A549 (cell line): ENCODE measurements at regions of chr9 and their contacts with region 1.

Region 1: GRCh38 chr9:36873247-36873875 is 160.7 kb downstream of the PAX5 start:
- DNase-seq: peak; percentile 73 to 83
- ATAC-seq: peak; percentile 81 to 97
- H3K4me3 ChIP-seq: no peak overlapping the region
- H3K27ac ChIP-seq: no peak overlapping the region
- H3K4me1 ChIP-seq: no peaks in the 10 kb centered on the region
- CTCF ChIP-seq: peak; percentile 90
- EP300 ChIP-seq: no peak
- POLR2A ChIP-seq: no peak
- RAD21 ChIP-seq: peak; percentile 97 to 98

Region 2: GRCh38 chr9:36748322-36748899 is 125.0 kb before region 1 on chr9:
- CTCF ChIA-PET with region 1: no interaction called
- POLR2A ChIA-PET with region 1: no interaction called
- DNase-seq: peak; percentile 35 to 41
- ATAC-seq: peak; percentile 68 to 83
- H3K4me3 ChIP-seq: no peak overlapping the region
- H3K27ac ChIP-seq: no peak overlapping the region
- H3K4me1 ChIP-seq: no peaks in the 10 kb centered on the region
- CTCF ChIP-seq: no peak
- EP300 ChIP-seq: no peak
- POLR2A ChIP-seq: no peak
- RAD21 ChIP-seq: no peak

Region 3: GRCh38 chr9:36862206-36863145 is 10.9 kb before region 1 on chr9:
- CTCF ChIA-PET with region 1: interaction called, 80 read pairs
- POLR2A ChIA-PET with region 1: no interaction called
- DNase-seq: peak; percentile 55 to 60
- ATAC-seq: peak; percentile 85 to 88
- H3K4me3 ChIP-seq: no peak overlapping the region
- H3K27ac ChIP-seq: no peak overlapping the region
- H3K4me1 ChIP-seq: no peaks in the 10 kb centered on the region; the same call in 2 of the 3 replicates
- CTCF ChIP-seq: peak; percentile 66
- EP300 ChIP-seq: no peak
- POLR2A ChIP-seq: no peak
- RAD21 ChIP-seq: peak; percentile 56 to 57

Region 4: GRCh38 chr9:36924071-36924470 is 50.7 kb after region 1 on chr9:
- CTCF ChIA-PET with region 1: interaction called, 12 read pairs
- POLR2A ChIA-PET with region 1: no interaction called
- DNase-seq: peak; percentile 90 to 98
- ATAC-seq: peak; percentile 90 to 92
- H3K4me3 ChIP-seq: no peak overlapping the region
- H3K27ac ChIP-seq: peak overlapping the region; percentile 39 to 75; a peak in 5 of 6 replicates
- H3K4me1 ChIP-seq: peaks cover 53% of the 10 kb centered on the region
- CTCF ChIP-seq: no peak
- EP300 ChIP-seq: peak in 1 of 2 experiments; percentile 54; a peak in 1 of 5 replicates
- POLR2A ChIP-seq: no peak
- RAD21 ChIP-seq: no peak

Region 5: GRCh38 chr9:36969216-36969771 is 95.9 kb after region 1 on chr9:
- CTCF ChIA-PET with region 1: interaction called, 166 read pairs
- POLR2A ChIA-PET with region 1: no interaction called
- DNase-seq: no peak
- ATAC-seq: peak in 1 of 2 experiments; percentile 27; a peak in 2 of 6 replicates
- H3K4me3 ChIP-seq: no peak overlapping the region
- H3K27ac ChIP-seq: no peak overlapping the region
- H3K4me1 ChIP-seq: peaks cover 8% of the 10 kb centered on the region; the same call in 2 of the 3 replicates
- CTCF ChIP-seq: no peak
- EP300 ChIP-seq: no peak
- POLR2A ChIP-seq: no peak
- RAD21 ChIP-seq: no peak

Region 6: DNA sequence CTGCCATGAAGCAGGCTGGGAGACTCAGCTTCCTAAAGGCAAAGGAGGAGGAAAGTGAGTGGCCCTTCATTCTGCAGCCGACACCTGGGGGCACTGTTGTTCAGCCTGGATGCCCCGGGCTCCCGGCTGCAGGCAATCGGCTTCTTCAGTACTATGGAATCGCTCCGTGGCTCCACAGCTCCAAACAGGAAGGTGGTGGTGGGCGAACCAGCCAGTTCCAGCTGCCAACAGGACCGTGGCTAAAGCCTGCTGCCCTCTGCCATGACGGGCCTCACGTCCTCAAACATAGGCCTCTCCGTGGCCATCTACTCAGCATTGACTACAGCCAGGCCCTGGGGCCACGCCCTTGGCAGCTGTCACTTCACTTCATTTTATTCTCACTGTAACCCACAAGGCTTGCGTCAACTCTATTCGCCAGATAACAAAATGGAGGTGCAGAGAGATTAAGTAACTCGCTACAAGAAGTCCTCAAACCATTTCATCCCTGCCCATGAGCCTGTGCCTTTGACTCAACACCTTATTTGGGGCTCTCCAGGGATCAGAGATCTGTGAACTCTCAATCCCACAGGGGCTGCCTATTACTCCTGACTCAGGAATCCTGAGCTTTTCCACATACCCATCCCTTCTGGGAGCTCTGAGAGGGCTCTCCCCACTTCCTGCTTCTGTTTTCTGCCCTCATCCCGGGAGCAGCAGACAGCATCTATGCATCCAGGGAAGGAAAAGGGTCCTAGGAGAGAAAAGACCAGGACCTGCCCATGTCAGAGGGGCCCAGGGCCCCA is 122.8 kb after region 1 on chr9:
- CTCF ChIA-PET with region 1: interaction called, 143 read pairs
- POLR2A ChIA-PET with region 1: no interaction called
- DNase-seq: peak; percentile 60 to 68
- ATAC-seq: peak; percentile 90 to 95
- H3K4me3 ChIP-seq: 0 out of 3 replicates have a peak overlapping the region, but pooled peaks have one; percentile 6
- H3K27ac ChIP-seq: no peak overlapping the region
- H3K4me1 ChIP-seq: no peaks in the 10 kb centered on the region
- CTCF ChIP-seq: peak; percentile 75
- EP300 ChIP-seq: no peak
- POLR2A ChIP-seq: no peak
- RAD21 ChIP-seq: peak; percentile 89 to 92

Region 7: DNA sequence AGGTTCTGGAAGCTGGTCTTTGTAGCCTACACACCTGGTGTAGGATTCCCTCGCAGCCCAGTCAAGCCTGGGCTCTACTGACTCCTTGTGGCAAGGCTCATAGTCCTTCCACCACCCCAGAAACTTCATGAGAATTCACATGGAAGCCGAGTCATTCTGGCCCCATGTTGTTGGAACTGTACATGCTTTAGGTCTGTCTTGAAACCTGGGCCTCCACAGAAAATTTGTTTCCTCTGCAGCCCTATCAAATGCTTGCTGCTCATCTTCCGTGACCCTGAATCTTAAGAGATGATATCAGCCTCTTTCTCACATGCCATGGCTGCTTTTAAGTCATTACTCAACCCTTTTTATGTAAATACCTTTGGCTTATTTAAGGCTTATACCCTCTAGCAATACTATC is 435.8 kb after region 1 on chr9:
- CTCF ChIA-PET with region 1: interaction called, 10 read pairs
- POLR2A ChIA-PET with region 1: no interaction called
- DNase-seq: peak in 1 of 2 experiments; percentile 44
- ATAC-seq: peak in 1 of 2 experiments; percentile 72; a peak in 3 of 6 replicates
- H3K4me3 ChIP-seq: no peak overlapping the region
- H3K27ac ChIP-seq: peak overlapping the region in 1 of 2 experiments; percentile 33; a peak in 1 of 6 replicates
- H3K4me1 ChIP-seq: peaks cover 5% of the 10 kb centered on the region; the same call in 1 of the 3 replicates
- CTCF ChIP-seq: peak; percentile 25; the same call in 2 of the 3 replicates
- EP300 ChIP-seq: no peak
- POLR2A ChIP-seq: no peak
- RAD21 ChIP-seq: peak; percentile 51 to 62; a peak in 4 of 5 replicates